Activated CD8-positive, alpha-beta memory T cell treated with anti-CD3 and anti-CD28 coated beads, Interleukin-2, amount 10 ng/mL, durations not matched to agents 7 days and 5 days (primary cell): ENCODE measurements at regions of chr2 and their contacts with region 1.

Region 1: GRCh38 chr2:191555092-191555742 is 122.7 kb upstream of the NABP1 start:
- DNase-seq: peak; percentile 88
- ATAC-seq: peak; percentile 90
- H3K4me3 Mint-ChIP-seq: no peak overlapping the region
- H3K27ac Mint-ChIP-seq: no peak overlapping the region
- H3K4me1 Mint-ChIP-seq: peaks cover 26% of the 10 kb centered on the region
- H3K27me3 Mint-ChIP-seq: peaks cover 41% of the 10 kb centered on the region

Region 2: GRCh38 chr2:191302459-191303139 is 252.6 kb before region 1 on chr2:
- CTCF ChIA-PET with region 1: no interaction called
- DNase-seq: no peak
- ATAC-seq: no peak
- H3K4me3 Mint-ChIP-seq: no peak overlapping the region
- H3K27ac Mint-ChIP-seq: no peak overlapping the region
- H3K4me1 Mint-ChIP-seq: no peaks in the 10 kb centered on the region
- H3K27me3 Mint-ChIP-seq: peaks cover 8% of the 10 kb centered on the region

Region 3: GRCh38 chr2:191539068-191539467 is 16.1 kb before region 1 on chr2:
- CTCF ChIA-PET with region 1: interaction called, 33 read pairs
- DNase-seq: no peak
- ATAC-seq: no peak
- H3K4me3 Mint-ChIP-seq: no peak overlapping the region
- H3K27ac Mint-ChIP-seq: no peak overlapping the region
- H3K4me1 Mint-ChIP-seq: no peaks in the 10 kb centered on the region
- H3K27me3 Mint-ChIP-seq: peaks cover 7% of the 10 kb centered on the region

Region 4: DNA sequence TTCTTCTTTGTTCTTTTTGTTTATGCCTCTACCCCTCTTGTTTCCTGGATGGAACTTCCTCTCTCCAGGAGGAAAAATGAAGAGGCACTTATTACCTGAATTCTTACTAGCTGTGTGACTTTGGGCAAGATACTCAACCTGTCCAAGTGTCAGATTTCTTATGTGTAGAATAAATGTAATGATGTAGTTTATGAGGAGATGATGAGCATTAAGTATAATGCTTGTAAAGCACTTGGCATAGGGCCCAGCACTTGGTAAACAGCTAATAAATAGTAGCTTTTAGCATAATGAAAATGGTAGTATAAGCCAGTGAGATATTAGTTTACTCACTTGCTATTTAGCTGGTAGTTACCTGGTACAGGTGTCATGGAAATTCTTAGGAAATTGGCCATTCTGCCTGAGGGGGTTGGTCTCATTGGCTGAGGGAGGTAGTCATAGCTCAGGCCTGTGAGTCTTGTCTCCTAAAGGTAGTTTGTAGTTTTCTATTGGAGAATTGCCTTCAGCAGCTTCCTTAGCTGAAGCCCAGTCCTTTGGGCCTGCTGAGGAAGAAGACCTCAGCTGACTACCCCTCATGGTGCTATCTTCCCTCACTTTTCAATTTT is 10.7 kb before region 1 on chr2:
- CTCF ChIA-PET with region 1: interaction called, 33 read pairs
- DNase-seq: no peak
- ATAC-seq: no peak
- H3K4me3 Mint-ChIP-seq: no peak overlapping the region
- H3K27ac Mint-ChIP-seq: no peak overlapping the region
- H3K4me1 Mint-ChIP-seq: no peaks in the 10 kb centered on the region
- H3K27me3 Mint-ChIP-seq: peaks cover 6% of the 10 kb centered on the region

Region 5: GRCh38 chr2:191566344-191566743 is 11.1 kb after region 1 on chr2:
- CTCF ChIA-PET with region 1: interaction called, 42 read pairs
- DNase-seq: peak; percentile 74
- ATAC-seq: peak; percentile 71
- H3K4me3 Mint-ChIP-seq: no peak overlapping the region
- H3K27ac Mint-ChIP-seq: no peak overlapping the region
- H3K4me1 Mint-ChIP-seq: peaks cover 48% of the 10 kb centered on the region
- H3K27me3 Mint-ChIP-seq: peaks cover 79% of the 10 kb centered on the region

Region 6: GRCh38 chr2:191611614-191612013 is 56.4 kb after region 1 on chr2:
- CTCF ChIA-PET with region 1: no interaction called
- DNase-seq: no peak
- ATAC-seq: no peak
- H3K4me3 Mint-ChIP-seq: no peak overlapping the region
- H3K27ac Mint-ChIP-seq: no peak overlapping the region
- H3K4me1 Mint-ChIP-seq: peaks cover 1% of the 10 kb centered on the region
- H3K27me3 Mint-ChIP-seq: peaks cover 2% of the 10 kb centered on the region

Region 7: GRCh38 chr2:191691016-191691735 is 136.0 kb after region 1 on chr2:
- CTCF ChIA-PET with region 1: interaction called, 10 read pairs
- DNase-seq: peak; percentile 63
- ATAC-seq: peak; percentile 84
- H3K4me3 Mint-ChIP-seq: no peak overlapping the region
- H3K27ac Mint-ChIP-seq: no peak overlapping the region
- H3K4me1 Mint-ChIP-seq: peaks cover 29% of the 10 kb centered on the region
- H3K27me3 Mint-ChIP-seq: no peaks in the 10 kb centered on the region

Region 8: DNA sequence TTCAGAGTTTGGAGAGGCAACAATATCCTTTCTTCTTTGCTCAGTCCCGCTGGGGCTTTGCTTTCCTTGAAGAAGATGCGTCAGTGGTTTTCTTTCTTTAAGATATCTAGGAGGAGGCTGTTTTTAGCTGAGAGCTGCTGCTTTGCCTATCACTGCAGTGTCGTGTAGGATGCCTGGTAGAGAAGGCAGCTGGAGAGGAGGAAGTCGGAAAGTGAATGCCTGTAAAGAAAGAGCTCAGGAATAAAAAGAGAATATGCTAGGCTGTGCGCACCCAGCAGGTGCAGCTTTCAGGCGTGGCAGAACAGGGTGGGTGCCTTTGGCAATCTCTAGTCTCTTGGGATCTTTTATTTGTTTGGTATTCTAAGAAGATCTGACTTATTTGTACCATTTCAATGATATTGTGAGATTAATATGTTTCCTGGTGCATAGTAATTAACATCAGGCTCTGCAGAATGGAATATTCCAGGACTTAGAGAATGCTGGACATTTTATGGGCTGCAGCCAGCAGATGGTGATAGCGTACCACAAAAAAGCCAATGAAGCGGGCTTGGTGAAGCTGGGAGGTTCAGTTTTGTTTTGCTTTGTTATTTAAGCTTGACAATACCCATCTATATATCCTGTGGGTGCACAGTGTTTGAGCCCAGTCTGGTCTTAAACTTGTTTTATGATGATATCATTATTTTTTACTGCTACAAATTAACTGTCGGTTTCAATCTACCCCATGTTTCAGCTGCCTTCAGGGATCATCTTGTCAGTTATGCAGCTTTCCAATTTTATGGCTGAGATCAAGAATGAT is 256.8 kb after region 1 on chr2:
- CTCF ChIA-PET with region 1: interaction called, 14 read pairs
- DNase-seq: peak; percentile 47
- ATAC-seq: peak; percentile 47
- H3K4me3 Mint-ChIP-seq: no peak overlapping the region
- H3K27ac Mint-ChIP-seq: no peak overlapping the region
- H3K4me1 Mint-ChIP-seq: no peaks in the 10 kb centered on the region
- H3K27me3 Mint-ChIP-seq: peaks cover 24% of the 10 kb centered on the region

Region 9: DNA sequence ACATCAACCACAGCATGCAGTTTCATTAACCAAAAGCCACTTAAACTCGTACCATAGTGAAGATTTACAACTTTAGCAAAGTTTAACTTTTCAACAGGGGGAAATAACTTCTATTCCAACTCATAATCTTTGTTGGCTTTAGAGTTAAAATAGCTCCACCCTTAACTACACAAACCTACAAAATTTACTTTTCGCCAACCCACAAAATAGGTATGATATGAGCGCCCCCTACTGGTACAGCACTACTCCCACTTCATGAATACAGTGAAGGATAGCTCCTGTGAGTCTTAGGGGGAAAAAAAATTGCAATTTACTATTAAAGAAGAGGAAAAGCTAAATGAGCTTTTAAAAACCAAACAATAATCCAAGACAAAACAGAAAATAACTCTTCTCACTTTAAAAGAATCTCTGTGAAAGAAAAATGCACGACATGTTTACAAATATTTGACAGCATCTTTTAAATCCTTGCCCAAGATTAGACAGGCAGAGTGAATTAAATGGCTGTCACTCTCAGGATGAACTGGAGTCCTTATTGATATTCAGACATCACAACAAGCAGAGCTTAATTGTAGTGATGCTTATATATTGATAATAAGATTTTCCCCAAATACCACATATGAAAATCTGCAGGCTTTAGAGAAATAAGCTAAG is 607.3 kb after region 1 on chr2:
- CTCF ChIA-PET with region 1: interaction called, 74 read pairs
- DNase-seq: peak; percentile 67
- ATAC-seq: peak; percentile 70
- H3K4me3 Mint-ChIP-seq: no peak overlapping the region
- H3K27ac Mint-ChIP-seq: no peak overlapping the region
- H3K4me1 Mint-ChIP-seq: peaks cover 10% of the 10 kb centered on the region
- H3K27me3 Mint-ChIP-seq: peaks cover 25% of the 10 kb centered on the region